ENCODE measurements at regions of chr15 and their contacts with region 1.

Region 1: GRCh38 chr15:40593588-40594428 is at the start of gene KNL1:
- DNase-seq: peak; percentile 95 to 97 (median 96)
- H3K4me3 ChIP-seq: peak within 1 kb of the TSS; percentile 87 to 99 (median 97)
- H3K27ac ChIP-seq: peak within 1 kb of the TSS; percentile 95 to 98
- H3K4me1 ChIP-seq: peaks cover 2 to 14% (median 11%) of the 10 kb centered on the region in 4 experiments
- H3K27me3 ChIP-seq: no peaks in the 10 kb centered on the region

Region 2: GRCh38 chr15:40569139-40569953 is 24.5 kb before region 1 on chr15 and contains the start of gene RPUSD2:
- CTCF ChIA-PET with region 1: interaction called, 14 read pairs
- POLR2A ChIA-PET with region 1: interaction called, 3 read pairs
- DNase-seq: peak; percentile 90 to 93 (median 90)
- H3K4me3 ChIP-seq: peak within 1 kb of the TSS; percentile 86 to 99 (median 96)
- H3K27ac ChIP-seq: peak within 1 kb of the TSS; percentile 64 to 82
- H3K4me1 ChIP-seq: peaks cover 14 to 32% (median 20%) of the 10 kb centered on the region in 4 experiments
- H3K27me3 ChIP-seq: no peaks in the 10 kb centered on the region

Region 3: DNA sequence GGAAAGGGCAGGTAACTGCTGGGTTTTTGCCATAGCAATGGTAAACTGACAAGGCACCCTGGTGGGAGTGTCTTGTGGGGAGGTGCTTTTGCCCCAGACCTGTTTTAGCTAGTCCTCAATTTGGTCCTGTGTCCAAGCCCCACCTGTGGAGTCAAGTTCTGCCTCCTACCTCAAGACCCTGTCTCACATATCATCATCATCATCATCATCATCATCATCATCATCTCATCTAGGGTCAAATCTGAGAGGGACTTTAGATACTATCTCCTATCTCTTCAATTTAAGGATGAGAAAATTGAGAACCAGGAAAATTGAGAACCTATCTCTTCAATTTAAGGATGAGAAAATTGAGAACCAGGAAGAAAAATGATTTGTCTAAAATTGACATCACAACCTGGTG is 10.1 kb after region 1 on chr15:
- CTCF ChIA-PET with region 1: interaction called, 10 read pairs
- POLR2A ChIA-PET with region 1: no interaction called
- DNase-seq: no peak
- H3K4me3 ChIP-seq: no peak overlapping the region
- H3K27ac ChIP-seq: no peak overlapping the region
- H3K4me1 ChIP-seq: no peaks in the 10 kb centered on the region
- H3K27me3 ChIP-seq: no peaks in the 10 kb centered on the region

Region 4: DNA sequence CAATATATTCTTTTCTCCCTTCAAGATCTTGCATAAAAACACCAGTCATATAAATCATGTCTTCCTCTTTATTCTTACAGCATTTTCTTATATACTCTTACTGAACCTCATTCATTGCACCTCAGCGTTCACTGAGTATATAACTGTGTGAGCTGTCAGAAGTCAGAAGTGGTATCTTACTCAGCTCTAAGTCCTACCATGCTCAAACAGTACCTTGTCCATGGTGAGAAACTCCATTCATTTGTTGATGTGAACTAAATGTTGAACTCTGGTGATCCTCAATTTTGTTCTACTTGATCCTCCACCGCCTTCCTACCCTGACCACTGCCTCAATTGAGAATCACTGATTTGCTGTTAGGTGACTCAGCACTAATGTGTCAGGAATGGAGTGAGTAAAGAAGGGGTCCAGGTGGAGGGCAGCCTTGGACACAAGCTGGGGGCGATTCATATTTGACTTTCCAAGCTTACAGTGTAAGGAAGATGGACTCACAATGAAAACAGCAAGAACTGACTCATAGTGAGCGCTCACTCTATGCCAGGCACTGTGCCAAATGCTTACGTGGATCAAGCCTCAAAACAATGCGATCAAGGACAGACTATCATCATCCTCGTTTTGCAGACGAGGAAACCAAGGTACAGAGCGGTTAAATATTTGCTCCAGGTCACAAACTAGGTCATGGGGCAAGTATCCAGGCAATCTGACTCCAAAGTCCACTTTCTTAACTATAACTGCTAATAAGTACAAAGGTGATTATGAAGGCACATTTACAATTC is 199.6 kb after region 1 on chr15:
- CTCF ChIA-PET with region 1: no interaction called
- POLR2A ChIA-PET with region 1: no interaction called
- DNase-seq: peak in 2 of 3 donors; percentile 29 to 36
- H3K4me3 ChIP-seq: no peak overlapping the region
- H3K27ac ChIP-seq: no peak overlapping the region
- H3K4me1 ChIP-seq: peaks cover 8 to 39% (median 25%) of the 10 kb centered on the region in 4 experiments
- H3K27me3 ChIP-seq: no peaks in the 10 kb centered on the region